CD4-positive, alpha-beta T cell (primary cell): ENCODE measurements at regions of chrX and their contacts with region 1.

Region 1: DNA sequence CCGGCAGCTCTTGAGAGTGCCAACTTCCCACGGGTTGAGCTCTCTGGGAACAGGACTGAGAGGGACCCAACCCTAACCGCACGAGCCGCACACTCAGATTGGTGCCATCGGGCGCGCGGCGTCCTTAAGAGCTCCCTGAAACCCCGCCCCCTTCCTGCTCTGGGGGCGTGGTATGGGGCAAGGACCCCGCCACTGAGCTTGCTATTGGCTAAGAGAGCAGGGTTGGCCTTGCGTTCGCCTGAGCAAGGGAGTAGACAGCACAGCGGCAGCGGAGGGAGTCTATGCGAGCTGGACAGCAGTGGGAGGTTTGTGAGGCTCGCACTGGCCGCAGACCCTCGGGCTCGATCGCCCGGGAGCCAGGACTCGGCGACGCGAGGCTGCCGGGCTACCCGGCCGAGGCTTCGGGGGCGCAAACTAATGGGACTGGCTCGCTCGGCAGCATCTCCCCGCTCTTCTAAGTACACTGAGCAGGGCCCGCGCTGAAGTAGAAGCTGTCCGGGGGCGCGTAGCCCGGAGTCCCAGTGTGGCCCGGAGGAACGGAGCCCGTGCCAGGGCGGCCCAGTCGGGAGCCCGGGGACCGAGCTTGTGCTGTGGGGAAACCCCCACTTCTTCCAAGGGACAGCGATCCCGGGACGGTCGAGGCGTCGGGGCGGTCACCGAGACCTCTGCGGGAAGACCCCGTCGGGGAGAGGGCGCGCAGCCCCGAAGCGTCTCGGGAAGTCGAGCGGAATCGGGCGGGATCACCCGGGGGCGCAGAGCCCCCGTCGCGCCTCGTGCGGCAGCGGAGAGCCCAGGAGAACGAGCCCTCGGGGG is at the start of gene EFNB1:
- DNase-seq: peak; percentile 70 to 94 (median 82)
- ATAC-seq: peak; percentile 94
- H3K4me3 ChIP-seq: peak within 1 kb of the TSS; percentile 80
- H3K4me3 Mint-ChIP-seq: peak within 1 kb of the TSS; percentile 94
- H3K27ac ChIP-seq: no peak within 1 kb of the TSS
- H3K27ac Mint-ChIP-seq: peak within 1 kb of the TSS; percentile 63
- H3K4me1 ChIP-seq: peaks cover 35% of the 10 kb centered on the region
- H3K4me1 Mint-ChIP-seq: peaks cover 23% of the 10 kb centered on the region
- H3K27me3 ChIP-seq: peaks cover 0 to 2% of the 10 kb centered on the region in 2 experiments
- H3K27me3 Mint-ChIP-seq: no peaks in the 10 kb centered on the region
- CTCF ChIP-seq: no peak
- total RNA-seq, gene EFNB1: 2.9 to 3.1 TPM

Region 2: GRCh38 chrX:68699960-68700746 is 128.8 kb before region 1 on chrX:
- CTCF ChIA-PET with region 1: no interaction called
- POLR2A ChIA-PET with region 1: no interaction called
- intact Hi-C with region 1: no loop called
- DNase-seq: peak in 2 of 14 experiments; percentile 45 to 51
- ATAC-seq: no peak
- H3K4me3 ChIP-seq: no peak overlapping the region
- H3K4me3 Mint-ChIP-seq: no peak overlapping the region
- H3K27ac ChIP-seq: no peak overlapping the region
- H3K27ac Mint-ChIP-seq: no peak overlapping the region
- H3K4me1 ChIP-seq: no peaks in the 10 kb centered on the region
- H3K4me1 Mint-ChIP-seq: no peaks in the 10 kb centered on the region
- H3K27me3 ChIP-seq: peaks cover 0 to 9% of the 10 kb centered on the region in 2 experiments
- H3K27me3 Mint-ChIP-seq: peaks cover 7% of the 10 kb centered on the region
- CTCF ChIP-seq: no peak

Region 3: GRCh38 chrX:69165087-69165651 is 336.2 kb after region 1 on chrX and contains the start of gene PJA1:
- CTCF ChIA-PET with region 1: interaction called, 3 read pairs
- POLR2A ChIA-PET with region 1: interaction called, 13 read pairs
- intact Hi-C with region 1: loop called in 1 of 2 experiments (anchors 2 kb)
- DNase-seq: peak; percentile 42 to 84 (median 64)
- ATAC-seq: peak; percentile 76
- H3K4me3 ChIP-seq: peak within 1 kb of the TSS; percentile 81
- H3K4me3 Mint-ChIP-seq: peak within 1 kb of the TSS; percentile 94
- H3K27ac ChIP-seq: peak within 1 kb of the TSS; percentile 58 to 79
- H3K27ac Mint-ChIP-seq: peak within 1 kb of the TSS; percentile 90
- H3K4me1 ChIP-seq: peaks cover 18% of the 10 kb centered on the region
- H3K4me1 Mint-ChIP-seq: peaks cover 31% of the 10 kb centered on the region
- H3K27me3 ChIP-seq: no peaks in the 10 kb centered on the region
- H3K27me3 Mint-ChIP-seq: no peaks in the 10 kb centered on the region
- CTCF ChIP-seq: no peak
- total RNA-seq, gene PJA1: 36.5 to 37.6 TPM

Region 4: GRCh38 chrX:69387567-69388487 is 558.9 kb after region 1 on chrX:
- CTCF ChIA-PET with region 1: no interaction called
- POLR2A ChIA-PET with region 1: no interaction called
- intact Hi-C with region 1: loop called in 1 of 2 experiments (anchors 5 kb)
- DNase-seq: peak in 12 of 14 experiments; percentile 0 to 46 (median 14)
- ATAC-seq: no peak
- H3K4me3 ChIP-seq: no peak overlapping the region
- H3K4me3 Mint-ChIP-seq: no peak overlapping the region
- H3K27ac ChIP-seq: no peak overlapping the region
- H3K27ac Mint-ChIP-seq: no peak overlapping the region
- H3K4me1 ChIP-seq: no peaks in the 10 kb centered on the region
- H3K4me1 Mint-ChIP-seq: no peaks in the 10 kb centered on the region
- H3K27me3 ChIP-seq: no peaks in the 10 kb centered on the region
- H3K27me3 Mint-ChIP-seq: no peaks in the 10 kb centered on the region
- CTCF ChIP-seq: peak; percentile 12